ENCODE measurements at regions of chr10 and their contacts with region 1.

Region 1: DNA sequence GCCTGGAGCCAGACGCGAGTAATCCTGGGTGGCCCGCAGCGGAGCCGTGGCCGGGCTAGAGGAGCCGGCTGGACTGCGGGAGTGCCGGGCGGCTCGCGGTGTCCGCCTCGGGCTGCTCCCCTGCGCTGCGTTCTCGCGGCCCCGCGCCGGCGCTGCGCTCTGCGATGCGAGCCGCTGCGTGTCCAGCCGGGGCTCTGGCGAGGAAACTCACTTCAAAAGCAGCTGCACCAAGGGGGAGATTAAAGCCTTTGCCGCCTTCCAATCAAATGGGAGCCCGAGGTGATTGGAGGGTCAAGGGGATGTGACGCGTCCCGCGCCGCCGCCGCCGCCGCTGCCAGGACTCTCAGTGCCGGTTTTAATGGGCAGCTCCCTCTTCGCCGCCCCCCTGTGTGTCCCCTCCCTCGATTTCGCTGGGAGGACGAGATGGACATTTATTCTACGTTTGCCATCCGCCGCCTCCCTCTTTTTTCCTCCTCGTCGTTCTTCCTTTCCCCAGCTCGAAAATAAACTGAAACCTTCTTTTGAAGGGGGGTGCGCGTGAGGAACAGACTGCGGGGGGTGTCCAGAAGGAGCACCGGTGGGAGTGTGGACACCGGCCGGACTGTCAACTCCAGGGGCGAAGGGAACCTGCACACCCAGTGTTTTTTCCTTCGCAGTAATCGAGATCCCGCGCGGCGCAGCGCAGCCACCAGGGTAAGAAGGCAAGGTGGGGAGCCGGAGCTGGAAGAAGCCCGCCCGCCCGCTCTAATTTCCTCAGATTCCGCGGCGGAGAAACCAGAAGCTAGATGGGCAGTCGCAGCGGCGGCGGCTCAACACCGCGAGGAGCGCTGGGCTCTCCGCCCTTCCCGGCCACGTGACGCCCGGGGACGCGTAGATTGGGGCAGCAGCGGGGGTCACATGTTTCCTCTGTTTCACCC is at the start of gene ZNF503:
- DNase-seq: peak; percentile 97
- H3K4me3 ChIP-seq: peak within 1 kb of the TSS; percentile 84 to 98 (median 97)
- H3K27ac ChIP-seq: peak within 1 kb of the TSS; percentile 56
- H3K4me1 ChIP-seq: peaks cover 41% of the 10 kb centered on the region
- H3K27me3 ChIP-seq: no peaks in the 10 kb centered on the region
- CTCF ChIP-seq: peak in 1 of 2 donors; percentile 35
- total RNA-seq, gene ZNF503: 14.1 to 33.7 TPM

Region 2: GRCh38 chr10:75223507-75223906 is 178.3 kb before region 1 on chr10:
- CTCF ChIA-PET with region 1: no interaction called
- dilution Hi-C with region 1: no loop called
- in situ Hi-C with region 1: no loop called
- intact Hi-C with region 1: no loop called
- DNase-seq: no peak
- H3K4me3 ChIP-seq: no peak overlapping the region
- H3K27ac ChIP-seq: no peak overlapping the region
- H3K4me1 ChIP-seq: peaks cover 49% of the 10 kb centered on the region
- H3K27me3 ChIP-seq: no peaks in the 10 kb centered on the region
- CTCF ChIP-seq: no peak

Region 3: GRCh38 chr10:75235375-75236177 is 166.3 kb before region 1 on chr10 and contains the start of gene COMTD1:
- CTCF ChIA-PET with region 1: no interaction called
- dilution Hi-C with region 1: no loop called
- in situ Hi-C with region 1: no loop called
- intact Hi-C with region 1: loop called (anchors 5 kb)
- DNase-seq: peak; percentile 89
- H3K4me3 ChIP-seq: peak within 1 kb of the TSS; percentile 67 to 81 (median 81)
- H3K27ac ChIP-seq: peak within 1 kb of the TSS; percentile 60
- H3K4me1 ChIP-seq: peaks cover 26% of the 10 kb centered on the region
- H3K27me3 ChIP-seq: no peaks in the 10 kb centered on the region
- CTCF ChIP-seq: peak; percentile 100
- total RNA-seq, gene COMTD1: 20.0 to 26.3 TPM

Region 4: DNA sequence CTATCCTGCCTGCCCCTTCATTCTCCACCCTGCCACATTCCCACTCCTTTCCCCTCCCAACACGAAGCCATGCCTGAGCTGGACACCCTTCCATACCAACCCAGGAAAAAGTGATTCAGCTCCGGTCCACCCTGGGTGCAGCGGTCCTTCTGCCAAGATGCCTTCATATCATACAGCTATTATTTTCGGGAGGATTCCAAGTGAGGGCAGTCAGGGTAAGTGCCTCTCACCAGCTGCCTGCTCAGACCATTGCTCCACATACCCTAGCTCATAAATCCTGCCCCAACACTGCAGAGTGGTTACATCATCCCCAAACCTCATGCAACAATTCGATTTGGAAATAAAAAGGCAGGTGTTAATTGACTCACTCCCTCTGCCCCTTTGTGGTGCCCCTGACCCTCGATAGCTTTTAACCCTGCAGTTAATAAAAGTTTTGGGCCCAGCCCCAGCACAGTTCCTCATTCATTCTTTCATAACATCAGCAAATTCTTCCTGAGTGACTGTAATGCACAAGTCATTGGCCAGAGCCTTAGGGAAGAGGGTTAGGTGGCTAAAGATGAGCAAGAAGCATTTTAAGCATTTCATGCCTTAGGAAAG is 42.9 kb before region 1 on chr10:
- CTCF ChIA-PET with region 1: interaction called, 13 read pairs
- dilution Hi-C with region 1: no loop called
- in situ Hi-C with region 1: no loop called
- intact Hi-C with region 1: no loop called
- DNase-seq: peak; percentile 94
- H3K4me3 ChIP-seq: no peak overlapping the region
- H3K27ac ChIP-seq: peak overlapping the region; percentile 53
- H3K4me1 ChIP-seq: peaks cover 23% of the 10 kb centered on the region
- H3K27me3 ChIP-seq: no peaks in the 10 kb centered on the region
- CTCF ChIP-seq: no peak

Region 5: DNA sequence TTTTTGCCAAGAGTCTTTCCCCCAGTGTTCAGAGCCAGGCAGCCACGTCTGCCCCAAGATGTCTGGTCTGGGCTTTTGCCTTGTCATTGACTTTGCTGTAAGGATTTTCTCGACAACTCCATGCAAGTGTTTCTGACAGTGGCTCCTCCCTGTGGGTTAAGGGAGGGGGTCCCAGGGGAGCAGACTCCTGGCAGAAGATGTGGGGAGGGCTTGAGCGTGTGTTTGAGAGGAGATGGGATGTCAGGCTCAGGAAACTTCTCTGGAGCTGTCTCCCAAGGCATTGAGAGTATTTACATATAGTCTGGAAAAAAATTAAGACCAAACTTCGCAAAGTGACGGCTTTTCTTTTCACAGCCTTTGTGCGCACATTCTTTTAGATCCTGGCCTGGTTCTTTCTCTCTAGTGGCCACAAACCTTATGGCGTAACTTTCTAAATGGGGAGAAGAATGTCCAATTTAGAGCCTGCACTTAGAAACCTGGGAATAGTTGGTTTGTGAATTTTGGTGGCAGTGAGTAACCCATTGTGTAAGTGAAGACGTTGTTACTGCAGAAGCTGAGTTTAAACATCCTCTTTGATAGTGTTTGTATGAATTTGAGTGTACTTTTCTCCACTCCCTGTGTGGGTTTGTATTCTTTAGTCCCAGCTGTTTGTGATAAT is 231.1 kb after region 1 on chr10:
- CTCF ChIA-PET with region 1: no interaction called
- dilution Hi-C with region 1: no loop called
- in situ Hi-C with region 1: loop called in 1 of 2 experiments (anchors 25 kb)
- intact Hi-C with region 1: no loop called
- DNase-seq: no peak
- H3K4me3 ChIP-seq: no peak overlapping the region
- H3K27ac ChIP-seq: no peak overlapping the region
- H3K4me1 ChIP-seq: no peaks in the 10 kb centered on the region
- H3K27me3 ChIP-seq: no peaks in the 10 kb centered on the region
- CTCF ChIP-seq: no peak

Region 6: GRCh38 chr10:75788394-75789205 is 386.8 kb after region 1 on chr10:
- CTCF ChIA-PET with region 1: no interaction called
- dilution Hi-C with region 1: no loop called
- in situ Hi-C with region 1: no loop called
- intact Hi-C with region 1: loop called (anchors 10 kb)
- DNase-seq: no peak
- H3K4me3 ChIP-seq: no peak overlapping the region
- H3K27ac ChIP-seq: no peak overlapping the region
- H3K4me1 ChIP-seq: no peaks in the 10 kb centered on the region
- H3K27me3 ChIP-seq: no peaks in the 10 kb centered on the region
- CTCF ChIP-seq: no peak

Region 7: DNA sequence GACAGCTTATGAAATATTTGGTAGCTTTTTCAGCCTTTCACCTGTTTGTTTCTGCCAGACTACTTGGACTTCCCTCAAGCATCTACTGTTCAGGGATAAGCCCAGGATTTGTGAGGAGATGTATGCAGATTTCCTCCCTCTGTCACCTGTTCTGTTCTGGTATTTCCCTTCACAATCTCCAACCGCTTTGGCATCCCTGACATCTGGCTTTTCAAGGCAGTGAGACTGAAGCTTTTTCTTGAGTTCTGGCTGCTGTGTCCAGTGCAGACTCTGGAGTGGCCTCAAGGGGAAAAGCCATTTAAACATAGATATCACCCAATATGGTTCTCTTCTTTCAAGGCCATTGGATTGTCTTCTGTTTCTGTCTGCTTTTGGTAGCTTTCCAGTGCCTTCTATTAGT is 399.3 kb after region 1 on chr10:
- CTCF ChIA-PET with region 1: no interaction called
- dilution Hi-C with region 1: no loop called
- in situ Hi-C with region 1: no loop called
- intact Hi-C with region 1: no loop called
- DNase-seq: no peak
- H3K4me3 ChIP-seq: no peak overlapping the region
- H3K27ac ChIP-seq: no peak overlapping the region
- H3K4me1 ChIP-seq: no peaks in the 10 kb centered on the region
- H3K27me3 ChIP-seq: no peaks in the 10 kb centered on the region
- CTCF ChIP-seq: no peak

Region 8: DNA sequence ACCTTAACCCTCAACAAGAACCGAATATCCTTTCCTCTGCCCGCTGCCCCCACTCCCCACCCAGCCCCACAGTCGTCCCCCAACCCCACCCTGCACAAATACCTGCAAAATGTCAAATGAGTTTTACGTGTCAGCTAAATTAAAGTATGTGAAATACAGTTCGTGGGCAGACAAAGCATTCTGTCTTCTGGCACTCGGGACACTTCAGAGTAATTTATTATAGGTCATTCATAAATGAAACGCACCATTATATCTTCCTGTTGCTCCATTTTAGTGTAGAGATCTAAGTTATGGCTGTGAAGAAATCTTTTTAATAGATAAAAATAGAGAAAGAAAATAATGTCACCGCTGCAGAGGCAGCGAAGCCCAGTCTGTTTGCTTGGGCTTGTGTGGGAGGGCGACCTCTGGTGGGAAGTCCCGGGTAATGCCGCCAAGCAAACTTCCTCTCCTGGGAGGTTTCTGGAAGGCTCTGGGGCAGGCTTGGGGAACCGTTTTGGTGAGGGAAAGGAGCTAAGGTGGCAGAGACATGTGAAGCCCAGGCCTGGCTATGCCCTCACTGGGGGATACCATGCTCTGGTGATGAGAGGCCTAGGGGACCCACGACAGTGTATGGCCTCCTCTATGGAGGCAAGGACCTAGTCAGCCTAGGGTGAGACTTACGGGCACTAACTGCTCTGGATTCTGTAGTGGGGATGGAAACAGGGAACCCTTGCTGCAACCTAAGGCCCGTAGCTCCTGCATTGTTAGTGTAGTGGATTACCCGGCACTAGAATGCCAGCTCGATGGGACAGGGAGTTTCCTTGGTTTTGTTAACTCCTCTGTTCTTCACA is 634.5 kb after region 1 on chr10:
- CTCF ChIA-PET with region 1: interaction called, 3 read pairs
- dilution Hi-C with region 1: no loop called
- in situ Hi-C with region 1: loop called (anchors 10 to 25 kb)
- intact Hi-C with region 1: loop called (anchors 1 kb)
- DNase-seq: peak; percentile 45
- H3K4me3 ChIP-seq: no peak overlapping the region
- H3K27ac ChIP-seq: no peak overlapping the region
- H3K4me1 ChIP-seq: peaks cover 4% of the 10 kb centered on the region
- H3K27me3 ChIP-seq: no peaks in the 10 kb centered on the region
- CTCF ChIP-seq: peak; percentile 86 to 91

Region 9: GRCh38 chr10:76547352-76547972 is 1145.6 kb after region 1 on chr10:
- CTCF ChIA-PET with region 1: no interaction called
- dilution Hi-C with region 1: no loop called
- in situ Hi-C with region 1: no loop called
- intact Hi-C with region 1: loop called (anchors 2 kb)
- DNase-seq: peak; percentile 60
- H3K4me3 ChIP-seq: no peak overlapping the region
- H3K27ac ChIP-seq: no peak overlapping the region
- H3K4me1 ChIP-seq: peaks cover 11% of the 10 kb centered on the region
- H3K27me3 ChIP-seq: no peaks in the 10 kb centered on the region
- CTCF ChIP-seq: peak; percentile 76 to 77